B cell (primary cell): ENCODE measurements at regions of chr16 and their contacts with region 1.

Region 1: GRCh38 chr16:23952128-23952970 is 116.6 kb downstream of the PRKCB start:
- DNase-seq: peak; percentile 38
- ATAC-seq: peak; percentile 29
- H3K4me3 ChIP-seq: peak overlapping the region in 1 of 5 experiments; percentile 15
- H3K4me3 Mint-ChIP-seq: peak overlapping the region; percentile 75
- H3K27ac ChIP-seq: peak overlapping the region; percentile 28 to 88
- H3K27ac Mint-ChIP-seq: peak overlapping the region; percentile 92
- H3K4me1 ChIP-seq: peaks cover 95 to 96% of the 10 kb centered on the region in 2 donors
- H3K4me1 Mint-ChIP-seq: peaks cover 93% of the 10 kb centered on the region
- H3K27me3 ChIP-seq: no peaks in the 10 kb centered on the region
- H3K27me3 Mint-ChIP-seq: no peaks in the 10 kb centered on the region
- CTCF ChIP-seq: no peak

Region 2: GRCh38 chr16:23835390-23836077 is 116.8 kb before region 1 on chr16 and contains the start of gene PRKCB:
- CTCF ChIA-PET with region 1: no interaction called
- POLR2A ChIA-PET with region 1: interaction called, 5 read pairs
- intact Hi-C with region 1: loop called (anchors 5 kb)
- DNase-seq: peak; percentile 93
- ATAC-seq: peak; percentile 83
- H3K4me3 ChIP-seq: peak within 1 kb of the TSS; percentile 78 to 98 (median 88)
- H3K4me3 Mint-ChIP-seq: peak within 1 kb of the TSS; percentile 99
- H3K27ac ChIP-seq: peak within 1 kb of the TSS; percentile 7 to 56
- H3K27ac Mint-ChIP-seq: peak within 1 kb of the TSS; percentile 96
- H3K4me1 ChIP-seq: peaks cover 34 to 37% of the 10 kb centered on the region in 2 donors
- H3K4me1 Mint-ChIP-seq: peaks cover 48% of the 10 kb centered on the region
- H3K27me3 ChIP-seq: no peaks in the 10 kb centered on the region
- H3K27me3 Mint-ChIP-seq: no peaks in the 10 kb centered on the region
- CTCF ChIP-seq: no peak
- total RNA-seq, gene PRKCB: 373 and 397 TPM in 2 replicates

Region 3: GRCh38 chr16:23917621-23918020 is 34.7 kb before region 1 on chr16:
- CTCF ChIA-PET with region 1: interaction called, 5 read pairs
- POLR2A ChIA-PET with region 1: interaction called, 5 read pairs
- intact Hi-C with region 1: loop called (anchors 5 kb)
- DNase-seq: no peak
- ATAC-seq: no peak
- H3K4me3 ChIP-seq: no peak overlapping the region
- H3K4me3 Mint-ChIP-seq: peak overlapping the region; percentile 43
- H3K27ac ChIP-seq: peak overlapping the region in 1 of 2 donors; percentile 28
- H3K27ac Mint-ChIP-seq: peak overlapping the region; percentile 86
- H3K4me1 ChIP-seq: peaks cover 69% of the 10 kb centered on the region in 2 donors
- H3K4me1 Mint-ChIP-seq: peaks cover 76% of the 10 kb centered on the region
- H3K27me3 ChIP-seq: no peaks in the 10 kb centered on the region
- H3K27me3 Mint-ChIP-seq: no peaks in the 10 kb centered on the region
- CTCF ChIP-seq: no peak

Region 4: GRCh38 chr16:23975293-23975692 is 22.9 kb after region 1 on chr16:
- CTCF ChIA-PET with region 1: no interaction called
- POLR2A ChIA-PET with region 1: no interaction called
- intact Hi-C with region 1: no loop called
- DNase-seq: no peak
- ATAC-seq: no peak
- H3K4me3 ChIP-seq: no peak overlapping the region
- H3K4me3 Mint-ChIP-seq: no peak overlapping the region
- H3K27ac ChIP-seq: no peak overlapping the region
- H3K27ac Mint-ChIP-seq: peak overlapping the region; percentile 70
- H3K4me1 ChIP-seq: peaks cover 29 to 34% of the 10 kb centered on the region in 2 donors
- H3K4me1 Mint-ChIP-seq: peaks cover 88% of the 10 kb centered on the region
- H3K27me3 ChIP-seq: no peaks in the 10 kb centered on the region
- H3K27me3 Mint-ChIP-seq: no peaks in the 10 kb centered on the region
- CTCF ChIP-seq: no peak